ENCODE measurements at regions of chr20 and their contacts with region 1.

Region 1: DNA sequence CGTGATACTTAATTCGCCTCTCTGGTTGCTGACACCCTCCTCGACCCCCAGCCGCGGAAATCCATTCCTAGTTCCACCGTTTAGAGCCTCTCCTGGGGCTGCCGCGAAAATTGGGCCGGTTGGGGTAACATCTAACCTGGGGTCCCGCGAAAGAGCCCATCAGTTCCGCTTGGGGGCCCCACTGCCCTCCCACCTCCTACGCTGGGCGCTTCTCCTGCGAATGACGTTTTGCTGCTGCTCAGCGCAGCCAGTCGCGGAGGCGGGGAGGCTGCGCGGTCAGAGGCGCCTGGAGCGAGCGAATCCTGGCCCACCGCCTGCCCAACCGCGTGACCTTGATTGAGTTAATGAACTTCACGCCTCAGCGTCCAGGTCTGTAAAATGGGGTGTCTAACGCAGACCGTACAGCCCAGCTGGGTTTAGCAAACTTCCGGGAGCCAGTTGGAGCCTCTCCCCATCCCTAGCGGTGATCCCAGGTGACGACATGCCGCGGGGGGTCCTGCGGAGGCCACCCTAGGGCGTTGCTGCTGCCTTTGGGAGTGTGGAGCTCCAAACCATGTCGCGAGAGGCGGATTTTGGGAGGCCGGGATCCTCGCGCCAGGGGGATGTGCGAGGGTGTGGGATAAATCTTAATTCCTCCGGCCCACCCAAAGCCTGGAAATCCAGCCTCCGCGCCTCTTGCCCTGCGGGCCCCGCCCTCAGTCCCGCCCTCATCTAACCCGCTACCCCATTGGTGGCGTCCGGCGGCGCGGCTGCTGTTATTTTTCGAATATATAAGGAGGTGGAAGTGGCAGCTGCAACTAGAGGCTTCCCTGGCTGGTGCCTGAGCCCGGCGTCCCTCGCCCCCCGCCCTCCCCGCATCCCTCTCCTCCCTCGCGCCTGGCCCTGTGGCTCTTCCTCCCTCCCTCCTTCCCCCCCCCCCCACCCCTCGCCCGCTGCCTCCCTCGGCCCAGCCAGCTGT is at the start of gene CDC25B:
- DNase-seq: peak; percentile 89
- ATAC-seq: peak; percentile 76
- H3K4me3 ChIP-seq: peak within 1 kb of the TSS; percentile 64 to 100 (median 90)
- H3K4me3 Mint-ChIP-seq: peak within 1 kb of the TSS; percentile 97
- H3K27ac ChIP-seq: peak within 1 kb of the TSS; percentile 93 to 97
- H3K27ac Mint-ChIP-seq: peak within 1 kb of the TSS; percentile 98
- H3K4me1 ChIP-seq: peaks cover 47 to 52% of the 10 kb centered on the region in 2 donors
- H3K4me1 Mint-ChIP-seq: peaks cover 49% of the 10 kb centered on the region
- H3K27me3 ChIP-seq: no peaks in the 10 kb centered on the region
- H3K27me3 Mint-ChIP-seq: no peaks in the 10 kb centered on the region
- CTCF ChIP-seq: peak; percentile 39
- total RNA-seq, gene CDC25B: 72.3 and 77.3 TPM in 2 replicates

Region 2: GRCh38 chr20:3811467-3812258 is 15.9 kb after region 1 on chr20:
- CTCF ChIA-PET with region 1: interaction called, 4 read pairs
- POLR2A ChIA-PET with region 1: interaction called, 6 read pairs
- intact Hi-C with region 1: loop called (anchors 1 kb)
- DNase-seq: peak; percentile 47
- ATAC-seq: peak; percentile 99
- H3K4me3 ChIP-seq: peak overlapping the region in 3 of 5 experiments; percentile 25 to 30 (median 25)
- H3K4me3 Mint-ChIP-seq: peak overlapping the region; percentile 87
- H3K27ac ChIP-seq: peak overlapping the region in 1 of 2 donors; percentile 35
- H3K27ac Mint-ChIP-seq: peak overlapping the region; percentile 81
- H3K4me1 ChIP-seq: peaks cover 8 to 19% of the 10 kb centered on the region in 2 donors
- H3K4me1 Mint-ChIP-seq: peaks cover 17% of the 10 kb centered on the region
- H3K27me3 ChIP-seq: no peaks in the 10 kb centered on the region
- H3K27me3 Mint-ChIP-seq: no peaks in the 10 kb centered on the region
- CTCF ChIP-seq: no peak

Region 3: DNA sequence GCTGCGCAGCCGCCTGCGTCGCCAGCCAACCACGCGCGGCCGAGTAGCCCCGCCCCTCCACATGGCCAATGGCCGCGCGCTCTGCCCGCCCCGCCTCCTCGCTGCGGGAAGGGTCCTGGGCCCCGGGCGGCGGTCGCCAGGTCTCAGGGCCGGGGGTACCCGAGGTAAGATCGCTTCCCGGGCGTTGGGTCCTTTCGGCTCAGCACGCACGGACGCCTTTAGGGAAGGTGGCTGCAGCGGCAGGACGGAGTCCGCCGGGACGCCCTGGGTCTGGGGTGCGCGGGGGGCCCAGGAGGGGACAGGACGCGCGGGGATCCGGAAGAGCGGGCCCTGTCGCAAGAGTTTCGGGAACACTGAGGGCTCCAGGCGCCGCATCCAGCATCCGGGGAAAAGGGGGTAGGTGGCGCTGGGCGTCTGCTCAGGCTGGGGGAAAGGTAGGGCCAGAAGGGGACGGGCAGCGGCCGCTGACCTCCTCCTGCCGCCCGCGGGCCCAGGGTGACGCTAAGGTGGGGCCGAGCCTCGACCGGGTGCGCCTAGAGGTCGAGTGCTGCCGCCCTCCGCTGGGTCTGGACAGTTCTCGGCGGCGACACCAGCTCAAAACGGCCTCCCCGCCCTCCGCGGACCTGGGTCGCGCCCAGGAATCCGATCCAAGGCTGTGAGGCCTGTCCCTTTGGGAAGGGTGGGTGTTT is 51.1 kb after region 1 on chr20 and contains the start of gene MAVS:
- CTCF ChIA-PET with region 1: no interaction called
- POLR2A ChIA-PET with region 1: interaction called, 4 read pairs
- intact Hi-C with region 1: loop called (anchors 2 kb)
- DNase-seq: peak; percentile 88
- ATAC-seq: peak; percentile 98
- H3K4me3 ChIP-seq: peak within 1 kb of the TSS; percentile 59 to 93 (median 86)
- H3K4me3 Mint-ChIP-seq: peak within 1 kb of the TSS; percentile 90
- H3K27ac ChIP-seq: peak within 1 kb of the TSS; percentile 63 to 86
- H3K27ac Mint-ChIP-seq: peak within 1 kb of the TSS; percentile 87
- H3K4me1 ChIP-seq: peaks cover 8 to 18% of the 10 kb centered on the region in 2 donors
- H3K4me1 Mint-ChIP-seq: peaks cover 32% of the 10 kb centered on the region
- H3K27me3 ChIP-seq: no peaks in the 10 kb centered on the region
- H3K27me3 Mint-ChIP-seq: no peaks in the 10 kb centered on the region
- CTCF ChIP-seq: no peak
- total RNA-seq, gene MAVS: 52.2 and 53.3 TPM in 2 replicates

Region 4: DNA sequence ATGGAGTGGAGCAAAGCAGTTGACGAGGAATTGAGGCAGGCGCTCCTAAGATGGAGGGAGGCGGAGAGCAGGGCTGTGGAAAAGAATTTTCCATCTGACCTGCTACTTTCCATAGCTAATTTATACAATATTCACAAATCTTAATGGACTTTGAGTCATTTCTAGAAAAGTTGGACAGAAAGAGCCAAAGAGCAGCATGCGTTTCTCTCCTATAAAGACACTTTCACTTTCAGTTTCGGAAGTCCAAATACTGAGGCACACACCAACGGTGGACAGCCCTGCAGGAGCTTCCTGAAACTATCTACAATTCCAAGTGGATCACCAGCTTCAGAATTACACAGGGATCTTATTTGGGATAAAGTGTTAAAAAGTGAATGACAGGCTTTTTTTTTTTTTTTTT is 136.9 kb after region 1 on chr20:
- CTCF ChIA-PET with region 1: no interaction called
- POLR2A ChIA-PET with region 1: no interaction called
- intact Hi-C with region 1: no loop called
- DNase-seq: no peak
- ATAC-seq: no peak
- H3K4me3 ChIP-seq: no peak overlapping the region
- H3K4me3 Mint-ChIP-seq: no peak overlapping the region
- H3K27ac ChIP-seq: no peak overlapping the region
- H3K27ac Mint-ChIP-seq: no peak overlapping the region
- H3K4me1 ChIP-seq: peaks cover 0 to 1% of the 10 kb centered on the region in 2 donors
- H3K4me1 Mint-ChIP-seq: peaks cover 3% of the 10 kb centered on the region
- H3K27me3 ChIP-seq: no peaks in the 10 kb centered on the region
- H3K27me3 Mint-ChIP-seq: no peaks in the 10 kb centered on the region
- CTCF ChIP-seq: no peak

Measured in B cell (primary cell).